BJ (cell line): ENCODE measurements at regions of chr3 and their contacts with region 1.

Region 1: DNA sequence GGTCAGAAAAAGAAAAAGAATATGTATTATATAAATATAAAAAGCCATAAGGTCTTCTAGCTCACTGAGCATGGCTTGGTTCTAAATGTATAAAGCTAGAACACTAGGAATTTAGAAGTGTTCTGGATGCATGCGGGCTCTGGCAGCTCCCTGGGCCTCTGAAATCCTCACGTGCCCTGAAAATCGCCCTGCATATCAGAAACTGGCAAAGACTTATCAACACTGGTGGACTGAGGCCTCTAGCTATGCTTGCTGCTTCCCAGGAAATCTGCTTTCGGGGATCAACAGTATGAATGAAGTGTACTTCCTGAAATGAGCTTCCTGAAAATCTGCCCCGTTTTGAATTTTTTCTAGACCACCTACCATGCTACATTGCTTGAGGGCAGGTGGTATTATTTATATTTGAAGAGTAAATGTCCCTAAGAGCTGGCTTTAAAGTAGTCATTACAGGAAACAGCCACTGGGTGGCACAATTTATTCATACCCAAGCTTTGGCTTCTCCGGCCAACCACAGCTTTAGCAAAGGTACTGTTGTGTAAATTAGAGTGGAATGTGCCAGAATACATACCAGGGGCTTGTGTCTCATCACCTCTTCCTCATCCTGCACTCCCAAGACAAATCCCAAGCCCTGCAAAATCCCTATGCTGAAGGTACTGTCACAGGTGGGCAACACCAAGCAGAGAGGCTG is 17.7 kb downstream of the CRTAP start:
- DNase-seq: no peak
- H3K4me3 ChIP-seq: no peak overlapping the region
- H3K27me3 ChIP-seq: no peaks in the 10 kb centered on the region
- CTCF ChIP-seq: peak; percentile 62

Region 2: GRCh38 chr3:33113772-33114621 is 17.5 kb before region 1 on chr3 and contains the start of gene CRTAP:
- CTCF ChIA-PET with region 1: interaction called, 13 read pairs
- POLR2A ChIA-PET with region 1: no interaction called
- DNase-seq: peak; percentile 80
- H3K4me3 ChIP-seq: peak within 1 kb of the TSS; percentile 75
- H3K27me3 ChIP-seq: no peaks in the 10 kb centered on the region
- CTCF ChIP-seq: no peak
- polyA plus RNA-seq, gene CRTAP: 311 and 376 TPM in 2 replicates

Region 3: GRCh38 chr3:33277193-33277882 is 145.9 kb after region 1 on chr3 and contains the start of gene FBXL2:
- CTCF ChIA-PET with region 1: no interaction called
- POLR2A ChIA-PET with region 1: no interaction called
- DNase-seq: peak; percentile 8
- H3K4me3 ChIP-seq: peak within 1 kb of the TSS; percentile 66
- H3K27me3 ChIP-seq: no peaks in the 10 kb centered on the region
- CTCF ChIP-seq: no peak
- polyA plus RNA-seq, gene FBXL2: 16.5 and 19.1 TPM in 2 replicates

Region 4: GRCh38 chr3:33377926-33378325 is 246.5 kb after region 1 on chr3:
- CTCF ChIA-PET with region 1: interaction called, 184 read pairs
- POLR2A ChIA-PET with region 1: interaction called, 3 read pairs
- DNase-seq: no peak
- H3K4me3 ChIP-seq: no peak overlapping the region
- H3K27me3 ChIP-seq: no peaks in the 10 kb centered on the region
- CTCF ChIP-seq: no peak